Endothelial cell of umbilical vein (primary cell): ENCODE measurements at regions of chr14 and their contacts with region 1.

Region 1: DNA sequence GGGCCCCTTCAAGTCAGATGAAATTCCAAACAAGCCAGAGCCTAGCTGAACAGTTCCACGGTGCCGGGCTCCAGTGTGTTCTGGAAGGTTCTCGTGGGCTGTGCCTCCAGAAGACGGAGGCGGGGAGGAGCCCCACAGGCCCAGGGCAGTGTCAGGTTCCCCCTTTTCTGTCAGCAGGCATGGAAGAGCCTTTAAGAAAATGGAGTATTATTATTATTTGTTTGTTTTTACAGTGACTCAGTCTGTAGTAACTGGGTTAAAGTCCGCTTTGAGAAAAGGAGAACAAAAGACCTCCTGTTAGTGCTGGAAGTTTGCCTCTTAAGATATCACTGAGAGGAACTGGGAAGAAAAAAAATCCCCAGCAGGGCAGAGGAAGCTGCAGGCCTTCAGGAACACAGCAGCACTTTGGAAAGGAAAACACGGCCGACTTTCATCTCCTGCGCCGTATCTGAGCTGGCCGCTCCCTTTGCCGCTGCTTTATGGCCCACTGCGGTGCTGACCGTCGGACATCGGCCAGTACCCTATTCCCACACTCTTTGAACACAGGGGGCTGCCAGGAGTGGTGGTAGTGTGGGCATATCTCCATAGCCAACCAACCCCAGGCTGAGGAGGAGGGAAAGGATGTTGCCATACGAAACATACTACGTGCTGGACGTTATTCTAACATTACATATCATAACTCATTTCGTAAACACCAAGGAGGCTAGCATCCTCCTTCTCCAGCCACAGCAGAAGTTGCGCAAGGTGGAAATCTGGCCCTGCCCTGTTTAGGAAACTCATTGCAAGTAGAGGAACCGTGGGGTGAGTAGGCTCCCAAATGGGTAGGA is 194.0 kb downstream of the ZFP36L1 start:
- DNase-seq: peak; percentile 97
- H3K4me3 ChIP-seq: no peak overlapping the region
- H3K27ac ChIP-seq: peak overlapping the region; percentile 82
- H3K4me1 ChIP-seq: peaks cover 24% of the 10 kb centered on the region
- H3K27me3 ChIP-seq: no peaks in the 10 kb centered on the region
- CTCF ChIP-seq: no peak
- POLR2A ChIP-seq: peak; percentile 55

Region 2: GRCh38 chr14:68552602-68553001 is 46.2 kb before region 1 on chr14:
- CTCF ChIA-PET with region 1: interaction called, 3 read pairs
- POLR2A ChIA-PET with region 1: no interaction called
- dilution Hi-C with region 1: no loop called
- intact Hi-C with region 1: loop called (anchors 2 kb)
- DNase-seq: peak; percentile 72
- H3K4me3 ChIP-seq: no peak overlapping the region
- H3K27ac ChIP-seq: peak overlapping the region; percentile 71
- H3K4me1 ChIP-seq: peaks cover 70% of the 10 kb centered on the region
- H3K27me3 ChIP-seq: no peaks in the 10 kb centered on the region
- CTCF ChIP-seq: no peak
- POLR2A ChIP-seq: peak; percentile 7

Region 3: DNA sequence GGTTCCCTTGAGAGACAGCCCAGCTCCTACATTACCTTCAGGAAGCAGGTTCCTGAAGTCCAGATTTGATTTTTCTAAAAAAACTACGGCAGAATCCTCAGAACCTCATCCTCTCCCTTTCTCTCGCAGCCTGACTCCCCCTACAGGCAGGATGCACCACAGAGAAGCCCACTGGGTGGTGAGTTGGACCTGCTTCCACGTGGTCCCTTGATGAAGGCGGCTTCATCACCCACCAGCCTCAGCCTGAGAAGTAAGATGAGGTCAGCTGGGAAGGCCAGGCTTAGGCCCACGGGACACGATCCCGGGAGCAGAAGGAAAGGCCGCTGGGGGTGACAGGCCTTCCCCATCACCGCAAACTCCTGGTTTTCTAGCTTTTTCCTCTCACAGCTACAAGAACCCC is 297.3 kb after region 1 on chr14:
- CTCF ChIA-PET with region 1: no interaction called
- POLR2A ChIA-PET with region 1: no interaction called
- dilution Hi-C with region 1: no loop called
- intact Hi-C with region 1: no loop called
- DNase-seq: peak; percentile 21
- H3K4me3 ChIP-seq: no peak overlapping the region
- H3K27ac ChIP-seq: no peak overlapping the region
- H3K4me1 ChIP-seq: peaks cover 23% of the 10 kb centered on the region
- H3K27me3 ChIP-seq: no peaks in the 10 kb centered on the region
- CTCF ChIP-seq: peak; percentile 23 to 42
- POLR2A ChIP-seq: no peak